Activated naive CD4-positive, alpha-beta T cell treated with anti-CD3 and anti-CD28 coated beads for 36 hours (primary cell): ENCODE measurements at regions of chr3 and their contacts with region 1.

Region 1: DNA sequence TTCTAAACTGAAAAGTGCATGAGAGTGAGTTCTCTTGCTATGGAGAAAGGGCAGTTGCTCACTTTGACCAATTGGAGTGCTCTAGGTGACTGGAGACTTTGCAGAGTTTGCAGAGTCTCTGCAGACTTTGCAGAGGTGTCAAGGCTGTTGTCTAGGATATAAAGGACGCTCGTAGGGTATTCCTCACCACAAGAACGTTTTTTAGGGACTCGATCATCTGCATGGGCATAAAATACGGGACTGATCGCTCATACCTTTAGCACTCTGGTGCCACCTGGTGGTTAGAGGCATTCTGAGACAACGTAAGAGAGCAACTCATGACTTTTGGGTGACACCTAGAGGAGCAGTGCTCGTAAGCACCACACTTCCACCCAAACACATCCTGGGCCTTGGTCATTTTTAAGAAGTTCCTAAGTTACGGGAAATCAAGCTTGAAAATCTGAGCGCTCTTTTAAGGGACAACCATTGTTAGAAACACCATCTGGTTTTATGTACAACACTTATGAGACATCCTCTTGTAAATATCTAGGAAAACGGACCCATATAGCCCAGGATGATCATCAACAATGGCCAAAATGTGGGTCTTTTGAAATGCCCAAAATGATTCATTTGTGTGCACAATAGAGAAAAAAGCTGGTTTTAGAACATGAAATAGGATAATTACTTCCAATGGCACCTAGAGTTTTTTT is 51.6 kb upstream of the XCR1 start:
- DNase-seq: peak; percentile 97
- H3K4me3 Mint-ChIP-seq: no peak overlapping the region
- H3K27ac Mint-ChIP-seq: no peak overlapping the region
- H3K4me1 Mint-ChIP-seq: no peaks in the 10 kb centered on the region
- H3K27me3 Mint-ChIP-seq: peaks cover 14% of the 10 kb centered on the region

Region 2: DNA sequence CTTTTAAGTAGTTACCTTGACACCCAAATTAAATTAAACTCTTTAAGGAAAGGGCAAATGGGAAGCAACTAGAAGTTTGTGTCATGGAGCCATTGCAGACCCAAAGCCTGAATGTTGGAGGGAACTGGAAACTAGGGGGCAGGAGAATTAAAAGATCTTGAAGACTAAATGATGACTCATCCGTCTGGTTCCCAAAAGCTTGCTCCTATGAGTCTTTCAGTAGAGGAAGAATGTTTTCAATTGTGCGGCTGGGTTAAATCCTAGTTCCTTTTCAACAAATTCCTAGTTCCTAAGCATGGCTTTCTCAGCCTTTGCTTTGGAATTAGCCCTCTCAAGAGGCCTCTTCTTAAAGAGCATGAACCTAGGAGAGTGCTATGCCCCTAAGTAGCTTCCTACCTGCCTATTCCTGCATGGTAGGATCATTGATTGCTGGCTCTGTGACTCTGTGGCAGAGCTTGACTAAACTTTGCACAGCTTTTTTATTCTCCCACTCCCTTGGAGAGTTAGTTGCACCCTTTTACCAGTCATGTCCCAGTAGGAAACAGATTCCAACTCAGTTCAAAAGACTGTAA is 1035.0 kb before region 1 on chr3:
- CTCF ChIA-PET with region 1: interaction called, 3 read pairs
- intact Hi-C with region 1: loop called (anchors 2 kb)
- DNase-seq: no peak
- H3K4me3 Mint-ChIP-seq: no peak overlapping the region
- H3K27ac Mint-ChIP-seq: no peak overlapping the region
- H3K4me1 Mint-ChIP-seq: peaks cover 20% of the 10 kb centered on the region
- H3K27me3 Mint-ChIP-seq: peaks cover 6% of the 10 kb centered on the region

Region 3: DNA sequence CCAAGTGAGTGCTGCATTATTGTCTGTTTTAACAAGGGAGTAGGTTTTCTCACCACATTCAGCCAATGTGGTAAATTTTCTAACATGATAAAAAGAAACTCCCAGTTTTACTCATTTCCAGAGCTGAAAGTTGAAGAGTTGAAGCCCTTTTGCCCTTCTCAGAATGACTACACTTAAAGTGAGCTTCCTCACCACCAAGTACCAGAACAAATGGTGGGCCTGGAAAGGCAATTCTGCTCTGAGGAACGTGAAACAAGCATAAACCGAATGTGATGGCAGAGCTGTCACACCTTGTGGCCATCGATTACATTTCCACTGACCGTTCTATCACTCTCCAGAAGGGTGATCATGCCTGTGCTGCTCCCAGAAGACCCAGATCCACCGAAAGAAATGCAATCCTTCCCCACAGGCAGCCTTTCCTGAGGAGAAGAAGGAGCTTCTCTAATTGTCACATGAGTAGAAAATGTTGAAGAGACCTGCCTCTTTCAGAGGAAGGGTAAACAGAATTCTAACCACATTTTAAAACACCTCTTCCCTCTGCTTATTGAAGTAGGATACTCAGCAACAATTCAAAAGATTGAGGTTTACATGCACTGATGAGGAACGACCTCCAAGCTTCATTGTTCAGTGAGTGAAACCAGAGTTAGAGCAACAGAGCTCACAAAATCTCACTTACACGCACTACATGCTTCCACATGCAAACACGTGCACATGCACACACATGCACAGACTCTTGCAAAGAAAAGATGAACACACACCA is 213.9 kb before region 1 on chr3:
- CTCF ChIA-PET with region 1: interaction called, 3 read pairs
- intact Hi-C with region 1: loop called (anchors 5 kb)
- DNase-seq: peak; percentile 48
- H3K4me3 Mint-ChIP-seq: no peak overlapping the region
- H3K27ac Mint-ChIP-seq: no peak overlapping the region
- H3K4me1 Mint-ChIP-seq: peaks cover 44% of the 10 kb centered on the region
- H3K27me3 Mint-ChIP-seq: peaks cover 53% of the 10 kb centered on the region

Region 4: GRCh38 chr3:45938864-45939263 is 140.0 kb before region 1 on chr3:
- CTCF ChIA-PET with region 1: interaction called, 263 read pairs
- intact Hi-C with region 1: loop called (anchors 1 kb)
- DNase-seq: peak; percentile 94
- H3K4me3 Mint-ChIP-seq: no peak overlapping the region
- H3K27ac Mint-ChIP-seq: no peak overlapping the region
- H3K4me1 Mint-ChIP-seq: peaks cover 25% of the 10 kb centered on the region
- H3K27me3 Mint-ChIP-seq: peaks cover 3% of the 10 kb centered on the region

Region 5: DNA sequence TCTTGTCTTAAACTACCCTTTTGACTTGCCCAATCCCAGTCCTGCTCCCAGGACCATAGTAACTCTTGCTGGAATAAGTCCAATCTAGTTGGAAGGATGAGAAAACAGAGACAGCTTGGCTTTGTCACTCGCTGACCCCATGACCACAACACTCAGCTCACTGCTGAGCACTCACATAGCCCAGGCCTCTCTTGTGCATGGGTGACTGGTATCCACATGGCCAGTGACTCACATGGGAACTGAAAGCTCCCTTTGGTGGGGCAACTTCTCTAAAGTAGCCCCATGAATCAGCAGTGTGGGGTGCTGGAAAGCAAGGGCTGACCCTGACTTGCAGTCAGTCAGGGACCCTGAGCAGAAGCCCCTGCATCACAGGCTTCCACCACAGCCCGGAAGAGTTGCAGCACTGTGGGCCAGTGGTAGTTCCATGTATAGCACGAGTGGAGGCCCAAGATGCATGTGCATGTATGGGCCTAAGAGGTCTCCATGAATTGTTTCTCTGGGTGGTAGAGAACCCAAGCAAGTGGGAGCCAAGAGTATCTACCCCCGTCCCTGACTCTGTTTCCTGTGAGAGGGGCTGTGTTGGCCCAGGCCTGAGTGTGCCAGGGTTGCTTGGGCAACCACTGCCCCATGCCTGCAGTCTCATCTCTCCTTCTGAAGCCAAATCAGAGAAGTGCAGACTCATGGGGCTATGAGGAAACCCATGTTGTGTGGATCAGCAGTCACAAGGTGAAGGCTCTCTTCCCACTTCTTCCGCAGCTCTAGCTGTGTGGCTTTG is 10.6 kb after region 1 on chr3:
- CTCF ChIA-PET with region 1: interaction called, 11 read pairs
- intact Hi-C with region 1: no loop called
- DNase-seq: no peak
- H3K4me3 Mint-ChIP-seq: no peak overlapping the region
- H3K27ac Mint-ChIP-seq: no peak overlapping the region
- H3K4me1 Mint-ChIP-seq: peaks cover 9% of the 10 kb centered on the region
- H3K27me3 Mint-ChIP-seq: peaks cover 30% of the 10 kb centered on the region

Region 6: DNA sequence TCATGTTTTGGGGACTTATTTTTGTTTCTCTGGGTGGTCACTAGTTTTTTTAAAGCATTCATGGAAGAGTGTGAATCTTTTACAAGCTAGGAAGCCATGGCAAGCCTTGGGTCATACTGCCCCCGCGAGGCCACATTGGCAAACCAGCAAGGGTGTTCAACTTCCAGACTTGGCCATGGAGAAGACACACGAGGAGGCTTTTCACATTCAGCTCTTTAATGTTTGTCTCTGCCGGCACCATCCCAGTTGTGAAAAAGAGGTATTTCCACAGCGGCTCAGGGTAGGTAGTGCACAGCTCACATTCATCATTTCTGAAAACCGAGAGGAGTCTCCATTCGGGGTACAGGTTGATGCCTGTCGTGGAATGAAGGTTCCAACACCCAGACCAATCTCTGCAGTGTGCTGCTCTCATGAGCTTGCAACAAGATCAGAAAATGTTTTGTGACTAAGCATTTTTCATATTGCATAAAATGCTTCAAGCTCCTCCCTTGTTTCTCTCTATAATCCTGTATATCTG is 299.6 kb after region 1 on chr3:
- CTCF ChIA-PET with region 1: interaction called, 31 read pairs
- intact Hi-C with region 1: loop called (anchors 5 kb)
- DNase-seq: peak; percentile 85
- H3K4me3 Mint-ChIP-seq: no peak overlapping the region
- H3K27ac Mint-ChIP-seq: no peak overlapping the region
- H3K4me1 Mint-ChIP-seq: peaks cover 19% of the 10 kb centered on the region
- H3K27me3 Mint-ChIP-seq: peaks cover 17% of the 10 kb centered on the region